ENCODE measurements at regions of chr14 and their contacts with region 1.

Region 1: DNA sequence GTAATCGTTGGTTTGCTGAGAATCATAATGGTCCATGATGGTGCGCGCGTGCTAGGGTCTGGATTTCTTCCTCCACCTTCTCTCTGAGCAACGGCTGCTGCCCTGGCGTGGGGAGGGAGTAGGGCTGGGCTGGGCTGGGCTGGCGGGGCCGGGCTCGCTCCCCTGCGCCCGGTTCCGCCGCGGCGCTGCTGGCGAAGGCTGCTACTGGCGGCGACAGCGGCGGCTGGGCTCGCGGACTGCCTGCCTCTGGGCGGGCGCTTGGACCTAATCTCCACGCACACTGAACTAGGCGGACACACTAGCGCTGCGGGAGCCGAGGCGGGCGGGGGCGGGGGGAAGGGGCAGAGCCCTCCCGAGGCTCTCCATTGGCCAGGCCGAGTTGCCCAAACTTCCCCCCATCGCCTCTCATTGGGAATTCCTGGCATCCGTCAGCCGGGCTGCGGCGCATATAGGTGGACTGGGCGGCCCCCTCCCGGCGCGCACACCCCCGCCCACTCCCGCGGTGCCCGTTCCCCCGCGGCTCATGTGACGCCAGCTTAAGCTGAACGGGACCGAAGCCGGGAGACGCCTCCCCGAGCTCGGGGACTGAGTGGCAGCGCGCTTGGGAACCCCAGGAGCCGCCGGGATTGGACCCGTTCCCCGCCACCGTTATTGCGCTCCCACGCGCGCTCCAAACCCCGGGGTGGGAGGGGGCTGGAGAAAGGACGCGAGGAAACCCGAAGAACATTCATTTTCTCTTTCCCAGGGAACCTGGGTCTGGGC is at the start of gene ACTN1:
- DNase-seq: peak; percentile 97
- ATAC-seq: peak; percentile 62
- H3K4me3 ChIP-seq: peak within 1 kb of the TSS; percentile 76
- H3K27ac ChIP-seq: peak within 1 kb of the TSS; percentile 98
- H3K4me1 ChIP-seq: peaks cover 44% of the 10 kb centered on the region
- H3K27me3 ChIP-seq: no peaks in the 10 kb centered on the region
- CTCF ChIP-seq: no peak
- POLR2A ChIP-seq: peak; percentile 94
- RAD21 ChIP-seq: 0 out of 2 replicates have a peak, but pooled peaks have one; percentile 16
- total RNA-seq, gene ACTN1: 648 and 684 TPM in 2 replicates

Region 2: DNA sequence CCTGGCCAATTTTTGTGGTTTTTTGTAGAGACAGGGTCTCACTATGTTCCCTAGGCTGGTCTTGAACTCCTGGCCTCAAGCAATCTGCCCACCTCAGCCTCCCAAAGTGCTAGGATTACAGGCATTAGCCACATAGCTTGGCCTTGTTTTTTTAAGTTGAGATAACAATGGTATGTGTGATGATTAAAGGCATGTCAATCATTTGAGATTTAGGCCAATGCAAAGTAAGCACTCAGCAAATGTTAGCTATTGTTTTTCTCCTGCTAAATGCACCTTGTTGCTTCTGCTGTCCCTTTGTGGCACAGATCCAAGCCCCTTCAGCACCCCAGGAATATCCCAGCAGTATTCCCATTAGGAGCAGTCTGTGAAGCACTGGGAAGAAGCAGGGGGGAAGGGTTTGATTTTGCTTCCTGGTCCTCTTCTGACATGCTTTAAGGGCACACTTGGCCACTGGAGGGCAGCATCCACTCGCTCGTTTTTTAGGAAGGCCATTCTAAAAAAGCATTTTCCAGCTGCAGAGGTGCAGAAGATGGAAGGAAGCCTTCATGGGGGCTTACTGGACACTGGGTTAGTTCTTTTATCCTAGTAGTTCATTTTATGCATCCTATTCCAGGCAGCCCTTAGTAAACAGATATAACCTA is 116.1 kb before region 1 on chr14:
- CTCF ChIA-PET with region 1: no interaction called
- POLR2A ChIA-PET with region 1: no interaction called
- dilution Hi-C with region 1: no loop called
- in situ Hi-C with region 1: no loop called
- intact Hi-C with region 1: loop called (anchors 5 kb)
- DNase-seq: peak; percentile 81
- ATAC-seq: peak; percentile 73
- H3K4me3 ChIP-seq: no peak overlapping the region
- H3K27ac ChIP-seq: no peak overlapping the region
- H3K4me1 ChIP-seq: no peaks in the 10 kb centered on the region
- H3K27me3 ChIP-seq: no peaks in the 10 kb centered on the region
- CTCF ChIP-seq: peak; percentile 85
- POLR2A ChIP-seq: 0 out of 2 replicates have a peak, but pooled peaks have one; percentile 41
- RAD21 ChIP-seq: peak; percentile 75

Region 3: GRCh38 chr14:68911594-68912227 is 67.5 kb before region 1 on chr14:
- CTCF ChIA-PET with region 1: interaction called, 4 read pairs
- POLR2A ChIA-PET with region 1: interaction called, 3 read pairs
- dilution Hi-C with region 1: no loop called
- in situ Hi-C with region 1: no loop called
- intact Hi-C with region 1: loop called (anchors 2 kb)
- DNase-seq: peak; percentile 75
- ATAC-seq: peak; percentile 84
- H3K4me3 ChIP-seq: no peak overlapping the region
- H3K27ac ChIP-seq: peak overlapping the region; percentile 14; the same call in 1 of the 2 replicates
- H3K4me1 ChIP-seq: peaks cover 13% of the 10 kb centered on the region
- H3K27me3 ChIP-seq: no peaks in the 10 kb centered on the region
- CTCF ChIP-seq: peak; percentile 99
- POLR2A ChIP-seq: no peak
- RAD21 ChIP-seq: peak; percentile 86

Region 4: DNA sequence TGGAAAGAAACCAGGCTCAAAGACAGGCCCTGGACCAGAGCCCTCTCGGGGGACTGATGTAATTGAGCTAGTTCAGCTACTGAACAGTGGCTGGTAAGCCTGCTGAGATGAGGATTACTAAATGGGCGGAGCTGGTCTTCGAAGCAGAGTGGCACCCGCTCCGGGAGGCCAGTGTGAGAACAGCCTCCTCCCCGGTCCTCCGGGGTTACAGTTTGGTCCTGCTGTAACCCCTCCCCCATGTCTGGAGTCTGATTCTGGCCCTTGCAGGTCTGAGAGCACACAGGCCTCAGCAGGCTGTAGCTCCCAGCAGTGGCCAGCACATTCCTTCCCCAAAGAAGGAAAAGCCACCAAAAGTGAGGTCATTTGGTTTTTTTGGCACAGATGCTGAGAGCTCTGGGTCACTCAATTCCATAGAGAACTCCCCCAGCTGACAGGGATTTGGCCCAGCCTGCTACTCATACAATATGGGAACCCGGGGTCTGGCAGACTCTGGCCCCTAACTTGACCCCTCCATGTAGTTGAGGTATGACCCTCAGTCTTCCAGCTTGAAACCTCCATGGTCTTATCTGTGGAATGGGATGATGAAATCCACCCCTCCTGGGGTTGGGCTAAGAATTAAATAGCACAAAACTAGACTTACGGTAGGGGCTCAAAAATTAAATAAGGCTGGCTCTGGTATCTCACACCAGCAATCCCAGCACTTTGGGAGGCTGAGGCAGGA is 39.1 kb before region 1 on chr14:
- CTCF ChIA-PET with region 1: interaction called, 3 read pairs
- POLR2A ChIA-PET with region 1: interaction called, 10 read pairs
- dilution Hi-C with region 1: no loop called
- in situ Hi-C with region 1: no loop called
- intact Hi-C with region 1: loop called (anchors 2 kb)
- DNase-seq: peak; percentile 97
- ATAC-seq: peak; percentile 78
- H3K4me3 ChIP-seq: no peak overlapping the region
- H3K27ac ChIP-seq: peak overlapping the region; percentile 63
- H3K4me1 ChIP-seq: peaks cover 68% of the 10 kb centered on the region
- H3K27me3 ChIP-seq: no peaks in the 10 kb centered on the region
- CTCF ChIP-seq: peak; percentile 22; the same call in 1 of the 2 replicates
- POLR2A ChIP-seq: no peak; the same call in 1 of the 2 replicates
- RAD21 ChIP-seq: peak; percentile 28; the same call in 1 of the 2 replicates

Region 5: DNA sequence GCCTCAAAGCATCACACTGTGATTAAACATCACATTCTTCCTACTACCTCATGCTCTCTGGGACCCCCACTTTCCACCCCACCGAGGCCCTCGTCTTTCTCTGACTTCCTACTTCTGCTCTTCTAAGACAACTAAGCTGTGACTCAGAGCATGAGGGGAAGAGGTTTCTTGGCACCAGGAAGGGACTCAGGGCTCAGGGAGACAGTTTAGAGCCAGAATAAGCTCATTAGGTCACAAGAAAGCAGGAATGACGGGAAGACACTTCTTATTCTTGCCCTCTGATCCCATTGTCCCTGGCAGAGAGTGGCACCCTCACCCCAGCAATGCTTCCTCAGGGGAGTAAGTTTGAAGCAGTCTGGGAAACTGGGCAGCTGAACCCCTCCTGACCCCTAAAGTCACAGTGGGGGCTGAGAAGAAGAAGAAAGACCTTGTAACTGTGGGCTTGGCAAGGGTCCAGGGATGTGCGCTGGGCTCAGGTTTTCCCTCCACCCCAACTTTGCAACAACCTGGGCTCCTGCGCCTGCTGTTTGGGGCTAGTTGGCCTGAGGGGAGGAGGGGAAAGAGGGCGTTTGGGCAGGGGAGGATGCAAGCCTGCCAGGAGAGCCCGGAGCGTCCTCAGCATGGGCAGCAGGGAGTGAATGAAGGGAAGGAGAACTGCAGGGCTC is 64.5 kb after region 1 on chr14:
- CTCF ChIA-PET with region 1: no interaction called
- POLR2A ChIA-PET with region 1: interaction called, 11 read pairs
- dilution Hi-C with region 1: no loop called
- in situ Hi-C with region 1: no loop called
- intact Hi-C with region 1: loop called (anchors 1 kb)
- DNase-seq: peak; percentile 77
- ATAC-seq: no peak
- H3K4me3 ChIP-seq: no peak overlapping the region
- H3K27ac ChIP-seq: peak overlapping the region; percentile 25
- H3K4me1 ChIP-seq: peaks cover 40% of the 10 kb centered on the region
- H3K27me3 ChIP-seq: no peaks in the 10 kb centered on the region
- CTCF ChIP-seq: no peak
- POLR2A ChIP-seq: no peak
- RAD21 ChIP-seq: no peak

Region 6: DNA sequence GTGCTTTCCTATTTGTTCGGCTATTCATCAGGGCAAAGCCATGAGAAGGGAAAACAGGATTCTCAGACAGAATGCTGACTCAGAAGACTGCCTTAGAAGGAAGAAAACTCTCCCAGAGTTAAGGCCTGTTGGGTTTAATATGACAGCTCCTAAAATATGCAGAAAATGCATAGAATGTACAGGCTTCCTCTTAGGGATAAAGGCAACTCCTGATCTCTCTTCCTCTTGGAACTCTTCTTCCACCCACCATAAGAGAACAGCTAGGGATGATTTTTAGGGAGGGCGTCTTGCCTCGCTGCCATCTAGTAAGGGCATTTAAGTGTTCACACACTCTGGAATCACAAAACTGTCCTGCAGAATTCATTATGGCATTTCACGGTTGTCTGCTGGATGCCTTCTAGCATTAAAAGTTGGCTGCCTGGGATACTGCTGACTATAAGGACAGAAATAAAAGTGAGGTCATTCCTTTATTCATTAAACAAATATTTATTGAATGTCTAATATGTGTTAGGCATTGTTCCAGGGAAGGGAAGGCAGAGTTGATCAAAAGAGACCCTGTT is 100.1 kb after region 1 on chr14:
- CTCF ChIA-PET with region 1: no interaction called
- POLR2A ChIA-PET with region 1: interaction called, 9 read pairs
- dilution Hi-C with region 1: no loop called
- in situ Hi-C with region 1: loop called (anchors 5 kb)
- intact Hi-C with region 1: loop called (anchors 1 kb)
- DNase-seq: peak; percentile 88
- ATAC-seq: peak; percentile 85
- H3K4me3 ChIP-seq: no peak overlapping the region
- H3K27ac ChIP-seq: peak overlapping the region; percentile 99
- H3K4me1 ChIP-seq: peaks cover 13% of the 10 kb centered on the region
- H3K27me3 ChIP-seq: no peaks in the 10 kb centered on the region
- CTCF ChIP-seq: no peak
- POLR2A ChIP-seq: no peak; the same call in 1 of the 2 replicates
- RAD21 ChIP-seq: no peak

Region 7: DNA sequence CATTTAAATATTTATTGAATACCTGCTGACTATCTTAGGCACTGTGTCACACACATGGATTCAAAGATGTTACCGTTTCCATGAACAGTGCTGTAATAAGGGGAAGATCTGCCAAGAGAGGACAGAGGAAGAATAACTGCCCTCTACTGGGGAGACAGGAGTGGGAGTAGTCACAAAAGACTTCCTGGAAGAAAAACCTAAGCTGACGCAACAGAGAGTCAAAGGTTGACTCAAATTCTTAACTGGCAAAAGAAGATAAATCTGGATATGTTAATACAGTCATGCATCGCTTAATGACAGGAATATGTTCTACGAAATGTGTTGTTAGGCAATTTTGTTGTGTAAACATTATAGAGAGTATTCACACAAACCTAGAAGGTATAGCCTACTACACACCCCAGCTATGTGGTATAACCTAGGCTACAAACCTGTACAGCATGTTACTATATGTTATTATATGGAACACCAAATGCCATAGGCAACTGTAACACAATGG is 122.2 kb after region 1 on chr14:
- CTCF ChIA-PET with region 1: interaction called, 7 read pairs
- POLR2A ChIA-PET with region 1: interaction called, 5 read pairs
- dilution Hi-C with region 1: no loop called
- in situ Hi-C with region 1: no loop called
- intact Hi-C with region 1: loop called (anchors 1 kb)
- DNase-seq: peak; percentile 91
- ATAC-seq: peak; percentile 86
- H3K4me3 ChIP-seq: no peak overlapping the region
- H3K27ac ChIP-seq: no peak overlapping the region
- H3K4me1 ChIP-seq: peaks cover 9% of the 10 kb centered on the region
- H3K27me3 ChIP-seq: no peaks in the 10 kb centered on the region
- CTCF ChIP-seq: peak; percentile 82
- POLR2A ChIP-seq: no peak
- RAD21 ChIP-seq: peak; percentile 81